ENCODE measurements at regions of chr18 and their contacts with region 1.

Region 1: DNA sequence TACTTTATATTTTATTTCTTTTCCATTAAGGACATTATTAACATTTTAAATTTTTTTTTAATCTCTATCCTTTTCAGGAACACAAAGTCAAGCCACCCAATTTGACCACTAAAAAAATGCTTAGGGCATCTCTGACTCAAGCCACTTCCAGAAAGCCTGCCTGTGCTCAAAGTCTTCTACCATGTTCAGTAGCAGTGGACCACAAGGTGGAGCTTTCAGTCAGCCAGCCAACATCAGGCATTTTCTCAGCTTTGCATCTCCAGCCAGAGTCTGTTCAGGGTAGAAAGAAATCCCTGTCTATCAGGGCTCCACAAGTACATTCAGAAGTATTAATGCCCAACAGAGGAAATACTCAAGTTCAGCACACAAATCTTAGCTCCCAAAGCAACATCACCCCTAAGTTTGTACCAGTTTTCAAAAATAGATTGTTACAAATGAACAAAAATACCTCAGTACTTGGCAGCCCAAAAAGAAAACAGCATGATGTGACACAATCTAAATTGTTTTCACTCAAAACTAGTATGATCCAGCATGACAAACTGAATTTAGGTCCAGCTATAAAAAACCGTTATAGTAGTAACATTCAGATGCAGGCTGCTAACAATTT is 37.6 kb downstream of the C18orf63 start:
- DNase-seq: peak; percentile 37
- CTCF ChIP-seq: peak; percentile 69

Region 2: DNA sequence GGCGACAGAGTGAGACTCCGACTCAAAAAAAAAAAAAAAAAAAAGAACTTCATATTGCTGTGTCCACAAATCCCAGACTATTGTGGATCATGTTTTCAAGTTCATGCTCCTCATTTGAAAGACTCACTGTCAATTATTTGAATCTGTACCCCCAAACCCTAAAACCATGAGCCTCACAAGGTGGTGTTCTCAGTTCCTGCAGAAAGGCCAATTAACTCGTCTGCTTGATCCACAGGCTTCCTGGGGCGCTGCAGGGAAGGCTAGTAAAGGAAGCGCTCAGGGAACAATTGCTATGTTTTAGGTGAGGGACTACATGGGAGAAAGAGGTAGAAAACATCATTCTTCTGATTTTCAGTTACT is 1088.7 kb before region 1 on chr18:
- CTCF ChIA-PET with region 1: no interaction called
- POLR2A ChIA-PET with region 1: no interaction called
- DNase-seq: no peak
- CTCF ChIP-seq: no peak

Region 3: GRCh38 chr18:74196220-74197119 is 156.8 kb before region 1 on chr18:
- CTCF ChIA-PET with region 1: interaction called, 18 read pairs
- POLR2A ChIA-PET with region 1: no interaction called
- DNase-seq: peak; percentile 80
- CTCF ChIP-seq: peak; percentile 88

Region 4: GRCh38 chr18:74368901-74369705 is 15.8 kb after region 1 on chr18:
- CTCF ChIA-PET with region 1: interaction called, 11 read pairs
- POLR2A ChIA-PET with region 1: no interaction called
- DNase-seq: no peak
- CTCF ChIP-seq: no peak

Region 5: DNA sequence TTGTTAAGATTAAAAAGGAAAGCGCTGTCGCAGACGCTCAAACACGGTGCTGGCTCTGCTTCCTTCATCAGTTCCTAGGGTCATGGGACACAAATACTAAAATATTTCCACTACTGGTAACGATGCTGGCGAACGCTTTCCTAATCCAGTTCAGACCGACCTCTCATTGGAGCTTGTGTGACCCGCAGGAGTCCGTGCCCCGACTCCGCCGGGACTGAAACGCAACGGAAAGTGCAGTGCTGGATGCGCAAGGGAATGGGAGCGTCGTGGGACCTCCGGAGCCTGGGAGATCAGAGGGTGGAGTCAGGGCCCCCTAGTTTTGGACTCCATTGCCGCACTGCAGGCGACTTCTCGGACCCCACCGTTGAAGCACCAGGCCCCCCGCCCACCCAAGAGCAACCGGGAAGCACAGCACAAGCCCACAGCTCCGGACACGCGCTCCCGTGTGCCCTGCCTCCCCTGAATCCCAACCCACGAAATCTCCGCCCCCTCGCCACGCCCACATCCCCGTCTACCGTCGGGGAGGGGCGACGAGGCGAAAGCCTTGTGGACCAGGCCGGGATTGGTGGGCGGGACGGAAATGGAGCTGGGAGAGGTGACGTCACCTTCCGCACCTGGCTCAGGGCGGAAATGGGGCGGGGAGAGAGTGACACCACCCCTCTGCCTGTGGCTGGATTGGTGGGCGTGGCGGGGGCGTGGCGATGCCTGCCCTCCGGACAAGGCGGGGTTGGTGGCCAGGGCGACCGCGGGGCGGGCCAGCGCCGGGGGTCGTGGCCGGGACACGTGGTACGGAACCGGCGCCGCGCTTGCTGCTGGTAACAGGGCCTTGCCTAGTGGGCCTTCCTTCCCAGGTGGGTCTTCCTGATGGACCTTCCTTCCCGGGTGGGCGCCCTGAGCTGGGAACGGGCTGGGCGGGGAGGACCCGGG is 142.6 kb after region 1 on chr18 and contains the start of gene CNDP2:
- CTCF ChIA-PET with region 1: interaction called, 56 read pairs
- POLR2A ChIA-PET with region 1: no interaction called
- DNase-seq: peak; percentile 98
- CTCF ChIP-seq: no peak